Posterior vena cava (tissue), 2 donors: ENCODE measurements at regions of chr15 and their contacts with region 1.

Region 1: DNA sequence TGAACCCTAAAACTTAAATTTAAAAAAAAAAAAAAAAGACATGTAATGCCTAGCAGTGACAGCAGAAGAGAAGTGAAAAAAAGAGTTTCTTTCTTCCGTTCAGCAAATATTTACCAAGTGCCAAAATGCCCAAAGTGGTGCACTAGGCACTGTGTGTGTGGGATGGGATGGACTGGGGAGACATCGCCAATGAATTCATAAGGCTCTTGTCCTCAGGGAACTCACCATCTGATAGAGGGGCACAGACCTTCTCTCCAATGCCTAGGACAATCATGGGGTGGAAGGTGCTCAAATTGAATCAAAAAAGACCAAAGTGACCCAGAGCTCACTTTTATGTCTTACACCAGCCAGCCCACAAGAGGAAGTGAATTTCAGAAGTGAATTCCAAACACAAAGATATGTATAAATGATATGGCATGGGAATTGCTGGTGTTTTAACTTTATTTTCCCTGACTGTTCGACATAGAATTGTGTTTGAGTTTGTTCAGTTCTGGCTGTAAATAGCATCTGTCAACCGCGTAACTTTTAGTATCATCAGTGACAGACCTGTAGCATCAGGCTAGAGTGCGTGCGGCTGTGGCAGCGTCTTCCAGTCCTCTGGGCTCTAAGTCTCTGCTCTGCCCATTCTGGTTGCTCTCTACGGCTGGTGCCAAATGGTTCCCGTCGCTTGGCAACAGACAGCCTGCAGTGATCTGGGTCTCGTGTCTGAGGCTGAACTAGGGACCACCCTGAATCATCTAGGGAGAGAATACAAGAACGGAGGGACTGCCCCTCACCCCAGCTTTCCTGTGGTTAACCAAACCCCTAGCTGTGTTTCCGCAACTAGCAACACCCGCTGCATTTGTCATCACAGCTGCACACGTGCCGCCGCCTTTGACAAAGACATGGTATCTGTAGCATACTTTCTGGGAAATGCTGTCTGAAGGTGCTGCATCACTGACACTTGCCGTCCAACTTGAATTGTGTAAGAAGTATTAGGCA is 154.0 kb upstream of the THBS1 start:
- DNase-seq: peak; percentile 92

Region 2: GRCh38 chr15:39358441-39359041 is 68.3 kb before region 1 on chr15:
- intact Hi-C with region 1: loop called in 1 of 2 experiments (anchors 2 kb)
- DNase-seq: no peak

Region 3: DNA sequence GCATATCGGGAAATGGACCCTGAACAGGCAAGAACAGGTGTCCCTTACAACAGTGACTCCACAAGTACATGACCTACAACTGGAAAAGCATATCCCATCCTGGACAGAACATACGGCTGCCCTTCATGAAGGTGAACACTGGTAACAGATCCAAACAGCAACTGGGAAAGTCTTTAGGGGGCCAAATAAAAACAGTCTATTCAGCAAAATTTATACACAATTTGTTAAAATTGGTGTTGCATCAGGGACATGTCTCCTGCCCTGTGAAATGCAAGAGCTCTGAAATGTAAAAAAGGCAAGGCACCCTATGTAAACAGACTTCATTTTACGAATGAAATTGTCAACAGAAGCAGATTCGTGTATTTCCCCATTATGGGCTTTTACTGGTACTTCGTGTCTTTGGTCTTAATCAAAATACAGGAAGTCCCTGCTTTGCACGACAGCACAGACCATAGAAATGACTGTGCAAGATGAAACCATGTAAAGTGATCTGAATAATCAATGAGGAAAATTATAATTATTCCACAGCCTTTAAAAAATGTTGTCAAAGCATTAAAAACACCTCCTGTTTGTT is 26.7 kb after region 1 on chr15:
- intact Hi-C with region 1: no loop called
- DNase-seq: no peak

Region 4: DNA sequence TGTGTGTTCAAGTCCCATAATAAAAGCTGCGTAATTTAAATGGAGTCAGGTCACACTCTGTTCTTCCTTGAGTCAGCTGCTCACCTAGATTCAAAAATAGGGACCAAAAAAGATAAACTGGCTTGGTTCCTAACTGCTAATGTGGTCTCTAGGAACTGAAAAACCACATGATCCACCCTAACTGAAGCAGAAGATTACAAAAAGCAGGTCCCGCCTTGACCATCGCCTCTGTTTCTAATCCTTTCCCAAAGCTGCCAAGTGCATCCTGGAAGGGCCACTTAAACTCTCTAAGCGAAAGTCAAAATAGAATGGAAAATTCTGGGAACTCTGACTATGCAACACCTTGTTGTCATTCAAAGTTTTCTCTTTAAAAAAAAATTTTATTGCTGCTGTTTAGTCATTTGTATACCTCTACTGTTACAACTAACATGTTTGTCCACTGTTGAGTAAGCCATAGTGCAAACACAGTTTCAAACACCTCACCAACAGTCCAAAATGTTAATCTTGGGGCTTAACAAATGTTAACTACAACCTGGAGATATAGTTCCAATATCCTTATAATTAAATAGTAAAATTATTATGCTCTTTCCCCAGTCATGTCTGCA is 65.1 kb after region 1 on chr15:
- intact Hi-C with region 1: no loop called
- DNase-seq: no peak

Region 5: DNA sequence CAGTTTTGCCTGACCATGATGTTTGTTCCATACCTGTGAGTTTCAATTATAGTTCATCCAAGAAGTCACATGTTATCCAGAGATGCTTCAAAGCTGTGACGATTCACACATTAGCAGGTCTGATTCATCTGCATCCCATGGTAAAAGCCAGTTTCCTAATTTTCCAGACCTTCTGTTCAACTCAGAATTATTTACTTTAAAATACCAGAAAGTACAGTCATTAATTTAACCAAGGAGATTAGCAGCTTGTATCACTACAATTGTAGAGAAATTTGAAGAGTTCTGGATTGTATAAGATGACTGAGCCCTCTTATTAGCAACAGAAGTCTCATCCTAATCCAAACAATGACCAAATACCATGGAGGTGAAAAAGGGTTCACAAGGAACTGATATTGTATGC is 78.0 kb after region 1 on chr15:
- intact Hi-C with region 1: no loop called
- DNase-seq: no peak

Region 6: GRCh38 chr15:39730552-39730951 is 303.7 kb after region 1 on chr15:
- intact Hi-C with region 1: loop called in 1 of 2 experiments (anchors 5 kb)
- DNase-seq: no peak